Astrocyte of the cerebellum (primary cell): ENCODE measurements at regions of chr20 and their contacts with region 1.

Region 1: DNA sequence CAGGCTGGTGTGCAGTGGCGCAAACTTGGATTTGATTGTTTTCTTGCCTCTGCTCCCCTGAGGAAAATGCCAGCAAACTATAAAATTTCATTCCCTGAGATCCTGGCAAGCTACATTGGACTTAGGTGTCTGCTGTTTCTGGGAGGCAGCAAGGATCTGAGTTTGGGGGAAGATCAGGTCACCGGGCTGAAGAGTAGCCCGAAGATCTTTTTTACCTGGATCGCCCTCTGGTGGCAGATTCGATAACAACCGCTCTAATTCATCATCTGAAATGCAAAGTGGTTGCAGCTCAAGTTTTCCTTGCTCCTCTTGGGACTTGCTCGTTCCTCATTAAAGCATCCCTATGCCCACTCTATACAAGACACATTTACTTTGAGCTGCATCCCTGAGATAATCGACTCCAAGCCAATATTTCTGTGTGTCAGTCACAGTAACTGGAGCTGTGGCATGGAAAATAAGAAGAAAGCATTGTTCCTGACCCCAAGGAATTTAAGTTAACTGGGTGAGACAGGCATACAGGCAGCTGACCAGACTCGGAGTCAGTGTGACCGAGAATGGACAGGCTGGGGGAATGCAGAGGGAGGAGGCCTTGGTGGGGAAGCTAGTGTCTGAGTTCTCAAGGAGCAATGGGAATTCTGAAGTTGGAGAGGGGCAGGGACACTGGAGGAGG is 131.8 kb upstream of the PROKR2 start:
- DNase-seq: peak; percentile 3
- H3K4me3 ChIP-seq: no peak overlapping the region
- CTCF ChIP-seq: peak; percentile 75

Region 2: DNA sequence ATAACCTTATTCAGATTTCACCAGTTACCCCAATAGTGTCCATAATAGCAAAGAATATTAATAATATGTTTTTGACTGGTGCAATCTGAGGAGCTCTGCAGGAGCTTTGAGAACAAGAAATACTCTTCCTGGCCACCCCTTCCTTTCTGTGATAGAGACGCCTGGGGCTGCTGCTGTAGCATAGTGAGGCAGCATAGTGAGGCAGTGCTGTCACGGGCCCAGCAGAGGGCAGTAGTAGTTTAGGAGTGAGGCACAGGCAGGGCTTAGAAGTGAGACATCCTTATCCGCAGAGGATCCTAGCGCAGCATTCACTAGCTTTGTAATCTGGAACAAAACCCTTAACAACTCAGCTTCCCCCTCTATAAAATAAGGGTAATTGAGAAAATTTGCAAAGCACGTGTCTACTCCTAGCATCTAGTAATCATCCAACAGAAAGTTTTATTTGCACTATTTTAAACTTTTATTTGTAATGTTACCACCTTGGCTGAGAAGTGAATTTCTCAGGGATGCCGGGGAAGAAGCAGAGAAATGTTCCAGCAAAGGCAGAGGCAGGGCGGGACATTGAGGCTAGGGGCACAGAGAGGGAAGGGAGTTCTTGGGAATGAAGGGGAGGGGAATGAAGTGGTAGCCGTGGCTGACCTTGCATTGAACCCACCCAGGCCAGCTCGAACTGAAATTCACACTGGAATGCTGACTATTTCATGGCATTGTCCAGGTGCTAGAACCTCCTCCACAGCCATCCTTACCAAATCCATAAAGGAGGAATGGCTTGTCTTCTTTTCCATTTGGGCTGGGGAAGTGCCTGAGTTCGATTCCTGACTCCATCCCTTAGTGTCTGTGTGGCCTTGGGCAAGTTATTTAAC is 243.0 kb before region 1 on chr20:
- in situ Hi-C with region 1: loop called (anchors 10 kb)
- DNase-seq: peak; percentile 59
- H3K4me3 ChIP-seq: no peak overlapping the region
- CTCF ChIP-seq: peak; percentile 98